AG04450 (cell line): ENCODE measurements at regions of chr1 and their contacts with region 1.

Region 1: DNA sequence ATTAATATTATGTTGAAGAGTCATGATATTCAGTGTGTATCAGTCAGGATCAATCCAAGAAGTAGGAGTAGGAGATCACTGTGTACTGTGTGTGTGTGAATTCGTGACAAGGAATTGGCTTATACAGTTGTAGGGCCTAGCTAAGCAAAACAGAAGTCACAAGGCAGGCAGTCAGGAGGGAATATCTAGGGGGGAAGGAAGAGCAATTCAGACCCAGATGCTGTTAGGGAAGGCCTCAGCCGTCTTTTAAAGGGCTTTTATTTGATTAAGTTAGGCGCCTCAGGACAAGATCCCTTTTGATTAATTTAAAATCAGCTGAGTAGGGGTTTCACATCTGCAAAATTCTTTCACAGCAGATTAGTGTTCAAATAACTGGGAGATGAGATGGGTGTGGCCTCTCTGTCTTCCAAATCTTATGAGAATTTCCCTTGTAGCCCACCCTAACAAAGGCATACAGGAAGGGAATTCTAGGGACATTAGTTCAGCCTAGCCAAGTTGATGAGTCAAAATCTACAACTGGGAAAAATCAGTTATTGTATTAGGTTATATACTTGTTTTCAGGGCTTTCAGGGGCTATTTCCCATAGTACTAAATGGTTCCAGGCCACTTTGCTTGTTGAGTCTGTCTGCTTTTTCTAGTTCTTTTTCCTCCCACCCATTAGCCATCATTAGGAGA is 47.4 kb downstream of the ALG6 start:
- DNase-seq: no peak
- H3K4me3 ChIP-seq: no peak overlapping the region
- H3K27ac ChIP-seq: no peak overlapping the region
- H3K27me3 ChIP-seq: no peaks in the 10 kb centered on the region
- CTCF ChIP-seq: no peak

Region 2: DNA sequence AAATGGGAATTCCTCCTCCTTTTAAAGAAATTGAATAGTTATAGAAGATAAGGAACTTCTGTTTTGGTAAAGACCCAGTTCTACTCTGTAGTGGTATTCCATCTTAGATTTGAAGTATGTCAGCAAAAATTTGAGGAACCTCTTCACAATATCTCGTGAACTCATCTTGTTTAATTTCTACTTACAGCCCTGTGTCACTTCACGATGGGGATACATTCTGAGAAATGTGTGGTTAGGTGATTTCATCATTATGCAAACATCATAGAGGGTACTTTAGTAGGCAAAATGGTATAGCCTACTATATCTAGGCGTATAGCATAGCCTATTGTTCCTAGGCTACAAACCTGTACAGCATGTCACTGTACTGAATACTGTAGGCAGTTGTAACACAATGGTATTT is 11.4 kb before region 1 on chr1:
- CTCF ChIA-PET with region 1: interaction called, 10 read pairs
- POLR2A ChIA-PET with region 1: no interaction called
- DNase-seq: no peak
- H3K4me3 ChIP-seq: no peak overlapping the region
- H3K27ac ChIP-seq: no peak overlapping the region
- H3K27me3 ChIP-seq: no peaks in the 10 kb centered on the region
- CTCF ChIP-seq: no peak

Region 3: GRCh38 chr1:63442141-63442475 is 27.3 kb after region 1 on chr1:
- CTCF ChIA-PET with region 1: interaction called, 14 read pairs
- POLR2A ChIA-PET with region 1: no interaction called
- DNase-seq: no peak
- H3K4me3 ChIP-seq: no peak overlapping the region
- H3K27ac ChIP-seq: no peak overlapping the region
- H3K27me3 ChIP-seq: no peaks in the 10 kb centered on the region
- CTCF ChIP-seq: no peak